ENCODE measurements at regions of chr16 and their contacts with region 1.

Region 1: GRCh38 chr16:86519649-86520316 is 9.5 kb downstream of the FOXF1 start:
- DNase-seq: peak in 2 of 4 donors; percentile 69 to 80
- ATAC-seq: peak; percentile 66
- H3K4me3 ChIP-seq: no peak overlapping the region
- H3K27ac ChIP-seq: peak overlapping the region in 1 of 2 donors; percentile 64
- H3K4me1 ChIP-seq: peaks cover 7 to 15% of the 10 kb centered on the region in 2 donors
- H3K27me3 ChIP-seq: peaks cover 29 to 83% of the 10 kb centered on the region in 2 donors
- CTCF ChIP-seq: peak; percentile 87 to 93

Region 2: DNA sequence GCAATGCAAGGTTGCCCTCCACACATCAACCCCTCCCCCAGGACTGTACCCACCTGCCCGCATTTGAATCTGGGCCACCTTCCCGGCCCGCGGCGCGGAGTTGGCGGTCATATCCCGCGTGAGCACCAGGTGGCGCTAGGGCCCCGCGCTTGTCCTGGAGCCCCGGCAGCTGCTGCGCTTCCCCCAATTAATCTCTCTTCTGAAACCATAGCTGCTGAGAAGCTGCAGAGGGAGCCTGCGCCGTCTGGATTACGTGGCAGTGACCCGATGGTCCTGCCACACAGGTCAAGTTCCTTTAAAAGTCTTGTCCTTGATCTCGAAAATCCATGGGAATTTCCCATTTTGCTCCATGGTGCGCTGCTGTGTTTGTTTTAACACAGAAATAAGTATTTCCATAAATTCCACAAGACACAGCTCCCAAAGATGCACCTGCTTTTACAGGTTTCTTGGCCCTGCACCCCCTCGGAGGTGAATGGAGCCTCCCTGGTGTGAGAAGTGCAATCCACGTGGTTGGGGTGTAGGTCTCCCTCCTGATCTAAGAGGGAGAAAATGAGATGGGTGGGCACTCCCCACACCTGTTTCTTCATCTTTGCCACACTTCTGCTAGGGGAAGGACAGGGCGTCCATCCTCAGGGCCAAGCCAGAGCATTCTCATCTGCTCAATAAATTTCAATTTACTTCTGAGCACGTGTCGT is 698.2 kb before region 1 on chr16:
- intact Hi-C with region 1: loop called in 1 of 2 experiments (anchors 10 kb)
- DNase-seq: peak; percentile 64 to 94 (median 85)
- ATAC-seq: peak; percentile 97
- H3K4me3 ChIP-seq: no peak overlapping the region
- H3K27ac ChIP-seq: no peak overlapping the region
- H3K4me1 ChIP-seq: peaks cover 4 to 11% of the 10 kb centered on the region in 2 donors
- H3K27me3 ChIP-seq: peaks cover 0 to 6% of the 10 kb centered on the region in 2 donors
- CTCF ChIP-seq: peak; percentile 94 to 97

Region 3: DNA sequence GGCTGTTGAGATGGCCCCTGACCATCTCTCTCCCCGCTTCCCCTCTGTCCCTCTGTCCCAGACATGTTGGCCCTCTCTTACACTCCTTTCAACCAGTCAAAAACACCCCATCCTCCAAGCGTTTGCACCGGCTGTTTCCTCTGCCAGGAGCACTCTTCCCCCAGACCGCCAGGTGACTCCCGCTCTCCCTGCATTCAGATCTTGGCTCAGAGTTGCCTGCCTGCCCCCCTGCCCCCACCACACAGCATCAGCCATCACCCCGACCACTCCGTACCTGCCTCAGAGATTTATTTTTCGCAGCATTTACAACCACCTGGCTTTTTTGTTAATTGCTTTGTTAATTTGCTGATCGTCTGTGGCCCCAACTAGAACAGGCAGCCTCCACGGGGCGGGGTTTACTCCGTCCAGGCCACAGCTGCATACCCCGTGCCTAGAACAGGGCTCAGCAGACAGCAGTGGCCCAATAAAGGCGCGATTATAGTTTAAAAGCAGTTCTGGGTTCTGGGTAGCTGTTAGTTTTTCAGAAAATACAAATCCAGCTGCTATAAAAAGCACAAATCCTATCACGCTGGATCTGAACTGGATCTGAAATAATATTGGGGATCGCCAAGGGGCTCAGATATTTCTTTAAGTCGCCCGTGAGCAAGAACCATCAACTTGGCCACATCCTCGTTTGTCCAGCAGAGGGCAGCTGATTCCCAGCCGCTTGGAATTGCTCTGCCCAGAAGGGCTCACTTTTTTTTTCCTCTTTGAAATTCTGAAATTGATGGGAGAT is 447.3 kb before region 1 on chr16:
- intact Hi-C with region 1: loop called (anchors 5 to 10 kb)
- DNase-seq: peak; percentile 23 to 87 (median 60)
- ATAC-seq: peak; percentile 78
- H3K4me3 ChIP-seq: no peak overlapping the region
- H3K27ac ChIP-seq: peak overlapping the region in 1 of 2 donors; percentile 50
- H3K4me1 ChIP-seq: peaks cover 0 to 10% of the 10 kb centered on the region in 2 donors
- H3K27me3 ChIP-seq: peaks cover 0 to 17% of the 10 kb centered on the region in 2 donors
- CTCF ChIP-seq: peak; percentile 72 to 81

Region 4: GRCh38 chr16:86195863-86196630 is 323.7 kb before region 1 on chr16:
- intact Hi-C with region 1: loop called (anchors 10 kb)
- DNase-seq: no peak
- ATAC-seq: no peak
- H3K4me3 ChIP-seq: no peak overlapping the region
- H3K27ac ChIP-seq: peak overlapping the region; percentile 48 to 78
- H3K4me1 ChIP-seq: no peaks in the 10 kb centered on the region
- H3K27me3 ChIP-seq: peaks cover 19 to 95% of the 10 kb centered on the region in 2 donors
- CTCF ChIP-seq: no peak

Region 5: GRCh38 chr16:86343027-86343787 is 176.6 kb before region 1 on chr16:
- intact Hi-C with region 1: loop called in 1 of 2 experiments (anchors 5 kb)
- DNase-seq: peak in 3 of 4 donors; percentile 42 to 82 (median 61)
- ATAC-seq: peak; percentile 56
- H3K4me3 ChIP-seq: no peak overlapping the region
- H3K27ac ChIP-seq: peak overlapping the region; percentile 68 to 81
- H3K4me1 ChIP-seq: peaks cover 3 to 13% of the 10 kb centered on the region in 2 donors
- H3K27me3 ChIP-seq: peaks cover 0 to 69% of the 10 kb centered on the region in 2 donors
- CTCF ChIP-seq: no peak

Measured in left lung (tissue), 14 donors.